Activated naive CD4-positive, alpha-beta T cell treated with anti-CD3 and anti-CD28 coated beads for 36 hours (primary cell): ENCODE measurements at regions of chr3 and their contacts with region 1.

Region 1: DNA sequence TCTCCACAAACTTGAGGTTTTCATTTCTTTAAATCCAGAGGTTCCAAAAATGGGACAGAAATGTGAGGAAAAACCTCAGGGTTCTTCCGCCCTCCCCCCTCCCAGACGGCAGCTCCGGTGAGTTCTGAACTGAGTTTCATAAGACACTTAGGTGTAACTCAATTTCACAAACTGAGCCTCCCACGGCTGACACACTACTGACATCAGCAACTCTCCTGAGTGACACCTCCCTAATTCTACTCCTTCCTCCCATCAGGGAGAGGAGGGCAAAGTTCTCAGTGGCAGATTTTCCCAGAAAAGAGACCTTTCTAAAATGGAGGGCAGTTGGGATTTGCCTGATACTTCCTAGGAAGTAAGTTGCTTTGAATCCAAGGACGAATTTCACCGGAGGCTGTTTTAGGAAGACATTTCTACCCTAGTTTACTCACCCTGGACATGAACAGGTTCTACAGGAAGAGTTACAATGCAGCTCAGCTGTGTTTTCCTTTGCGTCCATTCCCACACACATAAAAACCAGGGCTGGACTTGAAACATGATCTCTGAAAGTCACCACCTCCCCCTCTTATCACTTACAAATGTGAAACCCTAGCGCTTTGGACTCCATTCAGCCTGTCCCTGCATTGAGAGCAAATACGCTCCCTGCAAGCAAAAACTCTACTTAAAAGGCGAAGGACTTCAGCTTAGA is 78.1 kb upstream of the LMOD3 start:
- DNase-seq: peak; percentile 79
- H3K4me3 Mint-ChIP-seq: peak overlapping the region; percentile 75
- H3K27ac Mint-ChIP-seq: peak overlapping the region; percentile 96
- H3K4me1 Mint-ChIP-seq: peaks cover 68% of the 10 kb centered on the region
- H3K27me3 Mint-ChIP-seq: no peaks in the 10 kb centered on the region

Region 2: DNA sequence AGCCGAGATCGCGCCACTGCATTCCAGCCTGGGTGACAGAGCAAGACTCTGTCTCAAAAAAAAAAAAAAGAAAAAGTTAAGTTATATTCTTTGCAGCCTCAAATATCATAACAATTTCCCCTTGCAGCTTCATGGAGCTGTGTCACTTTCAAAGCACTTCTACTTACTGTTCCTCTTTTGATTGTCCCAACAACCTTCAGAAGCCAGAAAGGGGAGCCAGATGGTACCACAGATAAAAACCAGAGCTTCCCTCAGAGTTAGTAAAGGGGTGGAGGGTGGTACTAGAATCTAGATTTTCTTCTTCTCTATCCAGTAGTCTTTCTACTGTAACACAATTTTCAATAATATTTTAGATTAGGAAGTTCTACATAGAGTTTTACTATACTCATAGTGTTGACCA is 457.0 kb before region 1 on chr3:
- CTCF ChIA-PET with region 1: no interaction called
- intact Hi-C with region 1: no loop called
- DNase-seq: no peak
- H3K4me3 Mint-ChIP-seq: no peak overlapping the region
- H3K27ac Mint-ChIP-seq: no peak overlapping the region
- H3K4me1 Mint-ChIP-seq: no peaks in the 10 kb centered on the region
- H3K27me3 Mint-ChIP-seq: peaks cover 16% of the 10 kb centered on the region

Region 3: GRCh38 chr3:68866157-68866556 is 334.4 kb before region 1 on chr3:
- CTCF ChIA-PET with region 1: no interaction called
- intact Hi-C with region 1: no loop called
- DNase-seq: no peak
- H3K4me3 Mint-ChIP-seq: no peak overlapping the region
- H3K27ac Mint-ChIP-seq: no peak overlapping the region
- H3K4me1 Mint-ChIP-seq: no peaks in the 10 kb centered on the region
- H3K27me3 Mint-ChIP-seq: peaks cover 31% of the 10 kb centered on the region

Region 4: GRCh38 chr3:69084326-69085167 is 116.0 kb before region 1 on chr3 and contains the start of gene ARL6IP5:
- CTCF ChIA-PET with region 1: no interaction called
- intact Hi-C with region 1: loop called (anchors 1 kb)
- DNase-seq: peak; percentile 97
- H3K4me3 Mint-ChIP-seq: peak within 1 kb of the TSS; percentile 89
- H3K27ac Mint-ChIP-seq: peak within 1 kb of the TSS; percentile 95
- H3K4me1 Mint-ChIP-seq: peaks cover 57% of the 10 kb centered on the region
- H3K27me3 Mint-ChIP-seq: no peaks in the 10 kb centered on the region
- total RNA-seq, gene ARL6IP5: 66.4 to 71.5 TPM

Region 5: DNA sequence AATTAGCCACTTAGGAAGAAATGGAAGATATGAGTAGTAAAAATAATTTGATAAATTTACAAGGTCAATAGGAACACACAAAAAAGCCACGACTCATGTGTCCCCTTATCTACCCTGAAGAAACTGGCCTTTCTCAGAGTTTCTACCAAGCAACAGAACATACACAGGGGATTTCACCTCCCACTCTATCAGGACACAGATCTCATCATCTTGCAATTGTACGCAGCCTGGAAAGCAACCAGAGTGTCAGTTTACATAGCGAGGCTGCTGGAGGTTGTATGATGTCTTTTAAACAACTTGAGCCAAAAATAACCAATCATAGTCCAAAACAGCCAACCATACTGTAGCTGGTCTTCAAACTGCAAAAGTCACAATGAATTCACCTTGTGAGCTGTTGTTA is 58.4 kb before region 1 on chr3:
- CTCF ChIA-PET with region 1: no interaction called
- intact Hi-C with region 1: no loop called
- DNase-seq: no peak
- H3K4me3 Mint-ChIP-seq: no peak overlapping the region
- H3K27ac Mint-ChIP-seq: no peak overlapping the region
- H3K4me1 Mint-ChIP-seq: no peaks in the 10 kb centered on the region
- H3K27me3 Mint-ChIP-seq: peaks cover 2% of the 10 kb centered on the region

Region 6: GRCh38 chr3:69212411-69213139 is 12.0 kb after region 1 on chr3:
- CTCF ChIA-PET with region 1: interaction called, 4 read pairs
- intact Hi-C with region 1: loop called (anchors 1 kb)
- DNase-seq: peak; percentile 17
- H3K4me3 Mint-ChIP-seq: no peak overlapping the region
- H3K27ac Mint-ChIP-seq: peak overlapping the region; percentile 56
- H3K4me1 Mint-ChIP-seq: peaks cover 36% of the 10 kb centered on the region
- H3K27me3 Mint-ChIP-seq: no peaks in the 10 kb centered on the region

Region 7: DNA sequence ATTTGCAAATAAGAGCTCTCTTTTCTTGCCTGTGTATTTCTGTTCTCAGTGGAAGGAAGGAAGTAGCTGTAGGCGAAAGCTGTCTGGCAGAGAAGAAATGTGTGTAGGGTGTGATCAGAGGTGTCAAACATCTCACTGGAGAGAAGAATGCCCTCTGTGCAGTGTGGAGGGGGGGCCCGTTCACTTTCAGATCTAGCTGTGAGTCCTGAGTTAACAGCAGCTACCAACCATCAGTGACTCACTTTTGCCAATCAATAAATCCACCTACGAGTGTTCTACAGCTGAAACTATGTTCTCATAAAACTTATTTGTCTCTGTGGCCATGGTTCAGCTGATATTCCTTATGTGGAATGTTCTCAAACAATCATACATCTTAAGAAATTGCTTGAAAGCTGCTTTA is 81.7 kb after region 1 on chr3:
- CTCF ChIA-PET with region 1: interaction called, 5 read pairs
- intact Hi-C with region 1: loop called (anchors 1 kb)
- DNase-seq: peak; percentile 84
- H3K4me3 Mint-ChIP-seq: no peak overlapping the region
- H3K27ac Mint-ChIP-seq: peak overlapping the region; percentile 33
- H3K4me1 Mint-ChIP-seq: peaks cover 21% of the 10 kb centered on the region
- H3K27me3 Mint-ChIP-seq: no peaks in the 10 kb centered on the region

Region 8: DNA sequence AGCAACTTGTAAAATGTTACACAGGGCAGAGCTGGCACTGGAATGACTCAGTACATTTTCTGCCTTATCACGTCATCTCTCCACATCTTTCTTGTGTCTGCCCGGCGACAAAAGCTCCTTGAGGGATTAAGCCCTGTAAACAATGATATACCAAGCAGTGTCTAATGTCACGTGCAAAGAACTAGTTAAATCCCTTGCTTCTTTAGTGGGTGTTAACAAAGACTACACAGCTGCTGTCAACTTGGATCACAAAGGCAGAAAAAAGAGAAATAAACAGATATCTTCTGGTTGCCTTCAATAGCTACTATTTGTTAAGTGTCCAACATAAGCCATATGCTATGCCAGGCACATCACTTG is 233.4 kb after region 1 on chr3:
- CTCF ChIA-PET with region 1: no interaction called
- intact Hi-C with region 1: loop called (anchors 2 kb)
- DNase-seq: peak; percentile 36
- H3K4me3 Mint-ChIP-seq: no peak overlapping the region
- H3K27ac Mint-ChIP-seq: peak overlapping the region; percentile 19
- H3K4me1 Mint-ChIP-seq: peaks cover 40% of the 10 kb centered on the region
- H3K27me3 Mint-ChIP-seq: peaks cover 3% of the 10 kb centered on the region

Region 9: DNA sequence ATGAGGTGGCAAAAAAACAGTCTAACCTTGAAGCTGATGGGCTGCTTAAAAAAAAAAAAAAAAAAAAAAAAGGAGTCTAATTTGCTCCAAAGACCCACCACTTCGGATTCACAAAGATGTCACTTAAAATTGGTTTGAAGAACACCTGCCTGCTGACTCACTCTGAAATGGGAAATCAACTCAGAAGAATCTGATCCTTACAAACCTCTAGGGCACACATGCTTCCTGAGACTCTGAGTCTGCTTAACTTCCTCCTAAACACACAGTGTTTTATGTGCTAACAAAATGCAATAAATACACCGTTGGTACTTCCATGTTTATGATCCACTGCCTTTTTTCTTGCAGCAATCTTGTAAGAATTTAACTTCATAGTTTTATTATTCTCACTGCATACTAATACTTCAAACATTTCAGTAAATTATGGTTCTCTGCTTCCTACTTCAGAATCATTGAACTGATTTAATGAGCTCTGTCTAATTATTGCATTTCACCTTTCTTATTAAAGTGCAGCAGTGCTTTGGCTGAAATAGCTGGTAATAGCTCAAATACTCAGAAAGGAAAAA is 258.4 kb after region 1 on chr3:
- CTCF ChIA-PET with region 1: no interaction called
- intact Hi-C with region 1: no loop called
- DNase-seq: no peak
- H3K4me3 Mint-ChIP-seq: no peak overlapping the region
- H3K27ac Mint-ChIP-seq: no peak overlapping the region
- H3K4me1 Mint-ChIP-seq: no peaks in the 10 kb centered on the region
- H3K27me3 Mint-ChIP-seq: no peaks in the 10 kb centered on the region